ENCODE measurements at regions of chr13 and their contacts with region 1.

Region 1: GRCh38 chr13:51452361-51453206 is at the start of gene INTS6:
- DNase-seq: peak; percentile 99
- H3K4me3 Mint-ChIP-seq: peak within 1 kb of the TSS; percentile 80
- H3K27ac Mint-ChIP-seq: peak within 1 kb of the TSS; percentile 94
- H3K4me1 Mint-ChIP-seq: peaks cover 24% of the 10 kb centered on the region
- H3K27me3 Mint-ChIP-seq: no peaks in the 10 kb centered on the region
- CTCF ChIP-seq: no peak
- total RNA-seq, gene INTS6: 74.2 and 78.5 TPM in 2 replicates

Region 2: GRCh38 chr13:51465124-51465523 is 12.5 kb after region 1 on chr13:
- CTCF ChIA-PET with region 1: interaction called, 4 read pairs
- POLR2A ChIA-PET with region 1: interaction called, 15 read pairs
- intact Hi-C with region 1: no loop called
- DNase-seq: no peak
- H3K4me3 Mint-ChIP-seq: no peak overlapping the region
- H3K27ac Mint-ChIP-seq: no peak overlapping the region
- H3K4me1 Mint-ChIP-seq: no peaks in the 10 kb centered on the region
- H3K27me3 Mint-ChIP-seq: no peaks in the 10 kb centered on the region
- CTCF ChIP-seq: no peak

Region 3: DNA sequence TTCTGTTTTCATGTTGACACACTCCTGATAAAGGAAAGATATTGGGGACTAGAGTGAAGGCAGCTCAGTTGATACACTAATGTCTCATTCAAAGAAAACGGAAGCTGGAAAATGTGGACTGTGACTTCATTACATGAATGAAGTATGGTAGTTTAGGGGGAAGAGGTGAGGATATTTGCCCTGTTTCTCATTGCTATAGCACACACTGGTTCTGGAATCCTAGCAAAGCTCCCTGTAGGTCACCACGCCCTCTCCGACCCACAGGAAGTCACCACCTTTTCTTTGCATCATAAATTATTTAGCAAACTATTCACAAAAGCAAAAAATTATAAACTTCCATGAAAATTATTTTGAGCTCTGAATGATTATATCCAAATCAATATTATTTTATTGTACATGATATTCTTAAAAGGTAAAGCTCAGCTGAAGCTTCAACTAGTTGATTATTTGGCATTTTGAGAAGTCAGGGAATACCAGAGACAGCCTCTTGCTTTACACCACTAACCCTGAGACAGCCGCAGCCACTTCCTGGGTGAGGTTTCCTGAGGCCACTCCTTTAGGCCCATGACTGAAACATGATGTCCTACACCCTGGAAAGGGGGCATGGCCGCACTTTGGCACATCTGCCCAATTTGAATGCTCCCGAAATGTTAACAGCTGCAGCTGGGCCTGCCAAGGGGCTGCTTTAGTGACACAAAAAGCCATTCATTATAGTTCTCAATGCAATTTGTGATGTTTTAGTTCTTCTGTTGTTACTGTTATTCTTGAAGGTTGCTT is 81.6 kb after region 1 on chr13:
- CTCF ChIA-PET with region 1: interaction called, 4 read pairs
- POLR2A ChIA-PET with region 1: interaction called, 22 read pairs
- intact Hi-C with region 1: no loop called
- DNase-seq: peak; percentile 62
- H3K4me3 Mint-ChIP-seq: no peak overlapping the region
- H3K27ac Mint-ChIP-seq: peak overlapping the region; percentile 89
- H3K4me1 Mint-ChIP-seq: peaks cover 13% of the 10 kb centered on the region
- H3K27me3 Mint-ChIP-seq: no peaks in the 10 kb centered on the region
- CTCF ChIP-seq: no peak

Region 4: DNA sequence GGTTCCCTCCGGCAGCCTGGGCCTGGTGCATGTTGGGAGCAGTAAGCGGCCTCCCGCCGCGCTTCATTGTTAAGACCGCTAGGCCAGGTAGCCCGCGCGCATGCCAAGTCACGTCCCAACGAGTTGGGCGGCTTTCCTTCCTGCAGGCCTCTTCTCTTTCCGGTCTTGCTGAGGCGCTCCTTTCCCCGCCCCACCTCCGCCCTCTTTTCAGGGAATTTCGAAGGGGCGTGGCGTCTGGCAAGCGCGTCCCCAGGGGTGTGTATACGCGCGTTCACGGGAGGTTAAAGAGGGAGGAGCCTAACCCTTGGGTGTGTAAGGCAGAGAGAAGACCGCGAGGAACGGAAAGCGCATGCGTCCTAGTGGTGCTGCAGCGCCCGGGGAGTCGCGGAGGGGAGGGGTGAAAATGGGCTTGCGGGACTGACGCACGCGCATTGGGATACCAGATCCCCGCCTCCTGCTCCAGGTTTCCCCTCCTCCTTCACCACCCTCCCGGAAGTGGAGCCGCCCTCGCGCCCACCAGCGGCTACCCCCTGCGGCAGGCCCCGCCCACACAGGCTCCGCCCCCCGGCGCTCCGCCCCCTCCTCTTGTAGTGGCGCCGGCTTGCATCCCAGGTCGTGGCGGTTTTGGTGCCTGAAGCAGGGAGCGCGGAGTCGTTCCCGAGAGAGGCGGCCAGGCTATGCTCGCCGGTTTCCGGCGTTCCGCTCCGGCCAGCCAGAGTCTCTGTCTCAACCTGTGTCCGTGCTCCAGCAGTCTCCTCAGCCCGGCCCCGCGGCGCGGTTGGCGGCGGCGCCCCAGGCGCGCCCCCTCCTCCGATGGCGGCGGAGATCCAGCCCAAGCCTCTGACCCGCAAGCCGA is 131.5 kb after region 1 on chr13 and contains the start of gene WDFY2:
- CTCF ChIA-PET with region 1: interaction called, 6 read pairs
- POLR2A ChIA-PET with region 1: interaction called, 151 read pairs
- intact Hi-C with region 1: loop called (anchors 1 kb)
- DNase-seq: peak; percentile 100
- H3K4me3 Mint-ChIP-seq: peak within 1 kb of the TSS; percentile 88
- H3K27ac Mint-ChIP-seq: peak within 1 kb of the TSS; percentile 85
- H3K4me1 Mint-ChIP-seq: peaks cover 41% of the 10 kb centered on the region
- H3K27me3 Mint-ChIP-seq: no peaks in the 10 kb centered on the region
- CTCF ChIP-seq: no peak
- total RNA-seq, gene WDFY2: 46.7 and 56.2 TPM in 2 replicates

Region 5: GRCh38 chr13:51632591-51633362 is 180.2 kb after region 1 on chr13:
- CTCF ChIA-PET with region 1: no interaction called
- POLR2A ChIA-PET with region 1: interaction called, 44 read pairs
- intact Hi-C with region 1: no loop called
- DNase-seq: no peak
- H3K4me3 Mint-ChIP-seq: peak overlapping the region; percentile 66
- H3K27ac Mint-ChIP-seq: peak overlapping the region; percentile 97
- H3K4me1 Mint-ChIP-seq: peaks cover 50% of the 10 kb centered on the region
- H3K27me3 Mint-ChIP-seq: no peaks in the 10 kb centered on the region
- CTCF ChIP-seq: no peak

Region 6: DNA sequence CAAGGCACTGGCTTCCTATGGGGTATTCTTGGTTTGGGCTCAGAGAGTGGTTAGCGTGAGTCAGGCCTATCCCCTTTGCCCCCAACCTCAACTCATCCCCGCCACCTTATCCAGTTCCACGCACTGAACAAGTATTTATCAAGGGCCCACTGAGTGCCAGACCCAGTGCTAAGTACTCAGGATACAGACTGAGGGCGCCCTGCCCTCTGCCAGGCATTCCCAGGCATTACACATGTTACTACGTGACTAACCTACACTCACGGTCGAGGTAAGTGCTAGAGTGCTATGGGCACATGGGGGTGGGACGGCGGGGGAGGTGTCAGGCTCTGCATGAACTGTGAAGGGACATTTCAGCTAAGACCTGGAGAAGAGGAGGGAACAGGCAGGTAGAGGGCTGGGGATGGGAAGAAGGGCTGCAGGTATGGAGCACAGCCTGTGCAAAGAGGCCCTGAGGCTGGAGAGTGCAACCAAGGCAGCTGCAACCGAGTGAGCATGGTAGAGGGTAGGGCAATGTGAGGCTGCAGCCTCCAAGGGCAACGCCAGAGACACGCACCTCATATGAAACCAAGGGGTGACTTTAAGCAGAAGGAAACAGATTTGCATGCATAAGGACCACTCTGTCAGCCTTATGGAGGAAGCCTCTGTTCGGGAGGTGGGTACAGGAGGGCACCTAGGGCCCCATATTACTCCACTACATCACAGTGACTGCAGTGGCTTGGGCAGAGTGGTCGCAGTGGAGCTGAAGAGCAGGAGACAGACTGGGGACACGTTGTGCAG is 328.9 kb after region 1 on chr13:
- CTCF ChIA-PET with region 1: interaction called, 3 read pairs
- POLR2A ChIA-PET with region 1: interaction called, 3 read pairs
- intact Hi-C with region 1: loop called (anchors 5 kb)
- DNase-seq: peak; percentile 70
- H3K4me3 Mint-ChIP-seq: no peak overlapping the region
- H3K27ac Mint-ChIP-seq: peak overlapping the region; percentile 33
- H3K4me1 Mint-ChIP-seq: peaks cover 11% of the 10 kb centered on the region
- H3K27me3 Mint-ChIP-seq: no peaks in the 10 kb centered on the region
- CTCF ChIP-seq: peak; percentile 43

Measured in MCF 10A (cell line).